ENCODE measurements at regions of chr12 and their contacts with region 1.

Region 1: DNA sequence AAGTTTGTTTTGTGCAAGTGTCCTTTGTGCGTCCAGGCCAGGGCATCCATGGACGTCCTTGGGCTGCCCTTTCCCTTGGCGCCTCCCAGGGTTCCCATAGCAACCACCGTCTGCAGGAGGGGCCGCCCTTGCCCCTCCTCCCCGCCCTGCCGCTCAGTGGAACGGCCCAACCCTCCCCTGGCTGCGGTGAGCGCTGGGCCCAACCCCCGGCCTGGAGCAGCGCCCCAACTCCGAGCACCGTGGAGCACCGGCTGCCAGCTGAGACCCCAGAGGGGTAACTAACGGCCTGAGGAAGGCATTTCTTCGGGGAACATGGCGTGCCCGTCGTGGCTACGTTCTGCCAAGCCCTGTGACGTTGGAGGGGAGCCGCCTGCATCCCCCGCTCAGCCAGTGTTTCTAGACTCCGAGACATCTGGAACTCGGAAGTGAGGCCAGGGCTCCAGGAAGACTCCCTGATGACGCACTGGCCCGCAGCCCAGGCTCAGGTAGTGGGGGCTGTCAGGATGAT is 5.3 kb upstream of the ACACB start:
- DNase-seq: peak; percentile 25 to 74 (median 45)
- H3K4me3 ChIP-seq: peak overlapping the region; percentile 9 to 53
- H3K4me3 Mint-ChIP-seq: peak overlapping the region; percentile 73 to 88 (median 82)
- H3K27ac ChIP-seq: peak overlapping the region; percentile 68
- H3K27ac Mint-ChIP-seq: peak overlapping the region in 6 of 7 donors; percentile 73 to 91 (median 84)
- H3K4me1 ChIP-seq: peaks cover 7% of the 10 kb centered on the region
- H3K4me1 Mint-ChIP-seq: peaks cover 9 to 37% (median 20%) of the 10 kb centered on the region in 4 donors
- H3K27me3 ChIP-seq: no peaks in the 10 kb centered on the region
- H3K27me3 Mint-ChIP-seq: no peaks in the 10 kb centered on the region

Region 2: DNA sequence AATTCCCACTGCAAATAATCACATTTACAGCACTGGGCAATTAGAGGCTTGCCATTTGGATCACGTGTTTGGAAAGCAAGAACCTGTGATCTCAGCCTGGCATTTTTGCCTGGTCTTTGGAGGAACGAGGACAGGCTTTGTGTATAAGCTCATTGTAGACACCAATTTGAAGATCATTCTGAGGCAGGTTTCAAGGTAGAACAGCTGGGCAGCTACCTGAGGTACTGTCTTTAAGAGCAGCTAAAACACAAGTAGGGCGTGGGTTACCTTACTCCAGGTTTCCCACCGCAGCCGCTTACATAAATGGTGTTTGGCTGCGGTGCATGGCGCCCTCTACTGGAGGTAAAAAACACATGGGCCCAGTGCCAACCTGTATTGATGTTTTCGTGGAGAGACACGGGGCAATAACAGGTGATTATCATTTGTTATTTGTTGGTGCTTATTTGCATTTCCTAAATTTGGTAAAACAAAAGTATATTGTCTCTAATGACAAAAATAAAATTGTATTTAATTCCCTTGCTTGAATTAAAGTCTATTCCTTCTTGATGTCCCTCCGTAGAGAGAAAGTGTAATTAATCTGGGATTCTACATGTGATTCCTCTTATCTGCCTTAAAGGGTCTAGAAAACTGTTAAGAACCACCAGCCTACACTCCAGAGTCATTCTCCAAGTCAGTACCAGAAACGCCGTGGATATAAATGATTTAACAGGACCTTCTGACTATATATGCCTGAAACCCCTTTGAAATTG is 159.9 kb before region 1 on chr12:
- CTCF ChIA-PET with region 1: no interaction called
- POLR2A ChIA-PET with region 1: no interaction called
- intact Hi-C with region 1: no loop called
- DNase-seq: peak; percentile 68 to 76 (median 71)
- H3K4me3 ChIP-seq: no peak overlapping the region
- H3K4me3 Mint-ChIP-seq: peak overlapping the region in 2 of 8 donors; percentile 4 to 34
- H3K27ac ChIP-seq: no peak overlapping the region
- H3K27ac Mint-ChIP-seq: no peak overlapping the region
- H3K4me1 ChIP-seq: peaks cover 7% of the 10 kb centered on the region
- H3K4me1 Mint-ChIP-seq: peaks cover 0 to 5% (median 1%) of the 10 kb centered on the region in 4 donors
- H3K27me3 ChIP-seq: no peaks in the 10 kb centered on the region
- H3K27me3 Mint-ChIP-seq: peaks cover 10 to 13% of the 10 kb centered on the region in 2 donors

Region 3: GRCh38 chr12:108989376-108989775 is 121.7 kb before region 1 on chr12:
- CTCF ChIA-PET with region 1: no interaction called
- POLR2A ChIA-PET with region 1: no interaction called
- intact Hi-C with region 1: no loop called
- DNase-seq: no peak
- H3K4me3 ChIP-seq: no peak overlapping the region
- H3K4me3 Mint-ChIP-seq: no peak overlapping the region
- H3K27ac ChIP-seq: no peak overlapping the region
- H3K27ac Mint-ChIP-seq: no peak overlapping the region
- H3K4me1 ChIP-seq: no peaks in the 10 kb centered on the region
- H3K4me1 Mint-ChIP-seq: no peaks in the 10 kb centered on the region
- H3K27me3 ChIP-seq: no peaks in the 10 kb centered on the region
- H3K27me3 Mint-ChIP-seq: peaks cover 5 to 7% of the 10 kb centered on the region in 2 donors

Region 4: DNA sequence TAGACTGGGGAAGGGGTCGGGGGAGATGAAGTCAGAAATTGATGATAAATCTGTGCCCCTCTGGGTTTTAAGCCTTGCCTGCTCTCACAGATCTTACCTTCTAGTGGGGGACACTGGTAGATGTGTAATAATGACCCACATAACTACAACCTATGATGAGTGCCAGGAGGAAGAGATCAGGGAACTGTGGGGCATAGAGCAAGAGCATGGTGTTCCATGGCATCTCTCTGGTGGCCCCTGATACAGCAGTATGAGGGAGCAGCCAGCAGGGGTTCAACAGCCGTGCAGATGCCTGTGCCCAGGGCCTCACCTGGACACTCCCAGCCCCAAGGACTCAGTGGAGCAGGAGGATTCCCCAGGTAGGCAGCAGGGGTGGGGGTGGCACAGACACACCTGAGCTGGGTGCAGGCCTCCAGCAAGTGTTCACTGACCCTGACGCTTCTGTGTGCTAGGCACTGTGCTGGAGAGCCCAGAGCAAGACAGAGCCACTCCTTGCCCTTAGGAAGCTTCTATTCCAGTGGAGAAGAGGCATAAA is 10.4 kb after region 1 on chr12:
- CTCF ChIA-PET with region 1: interaction called, 12 read pairs
- POLR2A ChIA-PET with region 1: interaction called, 3 read pairs
- intact Hi-C with region 1: no loop called
- DNase-seq: no peak
- H3K4me3 ChIP-seq: no peak overlapping the region
- H3K4me3 Mint-ChIP-seq: no peak overlapping the region
- H3K27ac ChIP-seq: no peak overlapping the region
- H3K27ac Mint-ChIP-seq: peak overlapping the region in 1 of 7 donors; percentile 72
- H3K4me1 ChIP-seq: no peaks in the 10 kb centered on the region
- H3K4me1 Mint-ChIP-seq: no peaks in the 10 kb centered on the region
- H3K27me3 ChIP-seq: no peaks in the 10 kb centered on the region
- H3K27me3 Mint-ChIP-seq: no peaks in the 10 kb centered on the region

Region 5: DNA sequence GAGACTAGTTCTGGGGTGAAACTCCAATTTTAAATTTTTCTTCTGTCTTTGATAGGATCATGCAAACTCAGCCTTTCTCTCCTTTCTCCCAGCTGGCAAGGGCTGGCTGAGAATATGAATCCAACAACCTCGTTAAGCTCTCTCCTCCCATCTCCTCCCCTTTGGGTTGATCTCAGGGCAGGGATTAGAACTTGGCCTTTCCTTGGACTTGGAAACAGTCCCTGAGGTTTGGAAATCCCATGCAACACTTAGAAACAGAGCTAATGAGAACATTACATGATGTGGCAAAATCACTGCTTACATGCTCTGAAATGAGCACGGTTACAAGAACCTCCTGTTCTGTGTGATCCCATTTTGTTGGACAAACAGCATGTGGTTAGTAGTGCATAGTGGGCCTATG is 36.9 kb after region 1 on chr12:
- CTCF ChIA-PET with region 1: interaction called, 15 read pairs
- POLR2A ChIA-PET with region 1: no interaction called
- intact Hi-C with region 1: no loop called
- DNase-seq: no peak
- H3K4me3 ChIP-seq: no peak overlapping the region
- H3K4me3 Mint-ChIP-seq: no peak overlapping the region
- H3K27ac ChIP-seq: no peak overlapping the region
- H3K27ac Mint-ChIP-seq: no peak overlapping the region
- H3K4me1 ChIP-seq: no peaks in the 10 kb centered on the region
- H3K4me1 Mint-ChIP-seq: peaks cover under 1 to 4% (median 3%) of the 10 kb centered on the region in 4 donors
- H3K27me3 ChIP-seq: no peaks in the 10 kb centered on the region
- H3K27me3 Mint-ChIP-seq: peaks cover 0 to 1% of the 10 kb centered on the region in 2 donors

Region 6: DNA sequence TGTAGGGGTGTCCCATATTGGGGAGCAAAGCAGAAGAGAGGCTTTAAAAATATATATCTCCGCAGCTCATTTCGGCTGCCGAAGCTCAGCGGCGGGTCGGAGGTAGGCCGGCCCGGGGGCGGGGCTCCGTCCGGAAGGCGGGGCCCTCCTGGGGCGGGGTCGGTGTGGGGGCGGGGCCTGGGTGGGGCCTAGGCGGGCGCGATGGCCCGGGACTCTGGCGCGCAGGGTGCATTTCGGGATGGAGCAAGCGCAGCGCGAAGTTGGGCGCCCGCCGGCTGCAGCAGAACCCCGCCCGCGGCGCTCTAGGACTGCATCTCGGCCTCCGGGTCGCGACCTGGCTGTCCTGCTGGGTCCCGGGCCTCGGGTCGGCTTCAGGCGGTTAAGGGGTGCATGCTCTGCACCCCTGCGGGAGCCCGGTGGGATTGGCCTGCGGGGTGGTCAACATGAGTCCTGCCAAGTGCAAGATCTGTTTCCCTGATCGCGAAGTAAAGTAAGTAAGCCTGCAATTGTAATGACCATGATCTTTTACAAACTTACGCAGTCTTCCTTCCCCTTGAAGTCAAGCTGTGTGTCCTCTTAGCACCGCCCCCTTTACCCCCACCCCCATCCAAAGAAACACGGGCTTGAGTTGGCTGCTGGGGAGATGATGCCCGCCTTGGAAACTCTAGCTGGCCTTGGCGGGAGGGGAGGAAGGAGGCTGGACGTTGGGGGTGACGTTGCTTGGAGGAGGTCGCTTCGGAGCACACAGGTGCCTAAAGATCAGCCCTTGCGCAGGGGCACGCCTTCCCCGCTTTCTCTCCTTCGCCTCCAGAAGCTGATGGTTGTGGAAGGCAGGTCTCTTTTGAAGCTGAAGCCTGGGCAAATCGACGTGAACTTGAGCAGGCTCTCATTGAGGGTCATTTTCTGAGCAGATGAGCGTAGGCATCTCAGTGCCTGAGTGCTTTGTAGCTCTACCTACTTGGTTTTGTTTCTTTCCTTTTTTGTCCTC is 43.7 kb after region 1 on chr12:
- CTCF ChIA-PET with region 1: interaction called, 8 read pairs
- POLR2A ChIA-PET with region 1: interaction called, 3 read pairs
- intact Hi-C with region 1: loop called (anchors 2 kb)
- DNase-seq: peak; percentile 74 to 83 (median 77)
- H3K4me3 ChIP-seq: peak overlapping the region; percentile 68 to 75
- H3K4me3 Mint-ChIP-seq: peak overlapping the region; percentile 85 to 96 (median 94)
- H3K27ac ChIP-seq: peak overlapping the region; percentile 42
- H3K27ac Mint-ChIP-seq: peak overlapping the region; percentile 70 to 96 (median 87)
- H3K4me1 ChIP-seq: peaks cover 15% of the 10 kb centered on the region
- H3K4me1 Mint-ChIP-seq: peaks cover 10 to 24% (median 16%) of the 10 kb centered on the region in 4 donors
- H3K27me3 ChIP-seq: no peaks in the 10 kb centered on the region
- H3K27me3 Mint-ChIP-seq: no peaks in the 10 kb centered on the region

Measured in CD4-positive, alpha-beta memory T cell (primary cell).